ENCODE measurements at regions of chr7 and their contacts with region 1.

Region 1: GRCh38 chr7:36062154-36062815 is 90.8 kb upstream of the EEPD1 start:
- DNase-seq: no peak

Region 2: DNA sequence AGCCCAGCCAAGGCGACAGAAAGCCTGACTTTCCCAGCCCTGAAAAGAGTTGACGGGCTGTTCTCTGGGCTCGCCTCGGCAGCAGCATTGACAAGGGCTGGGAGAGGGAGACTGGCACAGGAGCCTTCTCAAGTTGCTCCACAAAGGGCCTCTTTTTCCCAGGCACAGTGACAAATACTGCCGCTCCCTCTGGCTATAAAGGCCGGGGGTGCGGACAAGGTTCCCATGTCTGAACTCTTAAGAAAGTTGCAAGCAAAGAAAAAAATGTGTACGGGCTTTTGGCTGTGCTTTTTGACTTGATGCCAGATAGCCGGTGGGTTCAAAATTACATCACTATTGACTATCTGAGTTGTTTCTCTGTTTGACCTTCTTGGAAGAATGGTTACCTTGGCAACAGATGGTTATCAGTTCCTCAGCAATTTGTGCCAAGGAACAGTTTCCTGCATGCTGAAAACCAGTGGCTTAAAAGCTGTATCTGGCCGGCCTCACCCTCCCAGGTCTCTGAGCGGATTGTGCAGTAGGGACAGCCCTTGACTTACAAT is 25.1 kb before region 1 on chr7:
- intact Hi-C with region 1: no loop called
- DNase-seq: no peak

Region 3: GRCh38 chr7:36615852-36616540 is 553.7 kb after region 1 on chr7:
- intact Hi-C with region 1: loop called in 1 of 2 experiments (anchors 10 kb)
- DNase-seq: no peak